ENCODE measurements at regions of chr1 and their contacts with region 1.

Region 1: DNA sequence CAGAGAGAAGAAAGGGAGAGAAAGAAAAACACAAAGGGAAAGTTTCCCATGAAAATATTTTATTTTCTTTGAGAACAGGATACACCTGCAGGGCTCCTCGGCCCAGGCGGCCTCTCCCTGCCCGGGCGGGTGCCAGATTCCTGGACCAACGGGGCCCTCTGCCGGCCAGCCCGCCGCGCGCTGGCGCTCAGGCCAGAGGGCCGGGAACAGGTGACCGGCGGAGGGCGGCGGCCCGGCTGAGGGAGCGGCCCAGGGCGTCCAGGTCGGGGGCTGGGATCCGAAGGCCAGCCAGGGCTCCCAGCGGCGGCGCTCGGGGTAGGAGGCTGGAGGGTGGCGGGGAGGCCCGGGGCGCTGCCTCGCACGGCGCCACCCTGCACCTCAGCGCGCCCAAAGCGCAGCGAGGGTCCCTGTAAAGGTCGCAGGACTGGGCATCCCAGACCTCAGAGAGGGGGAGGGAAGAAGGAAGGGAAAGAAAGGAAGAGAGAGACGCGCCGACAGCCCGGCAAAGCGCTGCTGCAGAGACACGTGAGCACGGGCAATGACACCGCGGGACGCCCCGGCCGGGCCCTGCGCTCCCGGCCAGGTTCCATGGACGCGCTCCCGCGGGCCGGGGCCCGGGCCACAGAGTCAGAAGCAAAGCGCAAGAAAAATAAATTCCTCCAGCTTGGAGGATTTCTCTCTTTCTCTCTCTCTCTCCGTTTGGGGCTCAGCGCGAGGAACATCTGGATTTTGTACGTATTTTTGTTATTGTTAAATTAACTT is 927 bp downstream of the WNT9A start:
- DNase-seq: peak; percentile 96
- H3K4me3 Mint-ChIP-seq: peak overlapping the region; percentile 66
- H3K27ac Mint-ChIP-seq: peak overlapping the region; percentile 86
- H3K4me1 Mint-ChIP-seq: peaks cover 14% of the 10 kb centered on the region
- H3K27me3 Mint-ChIP-seq: no peaks in the 10 kb centered on the region
- CTCF ChIP-seq: peak; percentile 98

Region 2: DNA sequence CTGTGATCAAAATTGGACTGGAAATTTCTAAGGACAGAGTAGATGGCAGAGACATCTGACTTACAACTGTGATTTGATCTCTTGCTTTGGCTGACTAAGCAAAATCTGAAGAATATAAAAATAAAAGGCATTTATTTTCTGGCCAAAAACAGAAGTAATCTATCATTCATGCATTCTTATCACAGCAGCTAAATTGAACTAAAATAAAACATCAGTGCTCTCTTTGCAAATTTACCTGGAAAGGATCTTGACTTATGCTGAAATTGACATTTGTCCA is 464.8 kb before region 1 on chr1:
- CTCF ChIA-PET with region 1: interaction called, 7 read pairs
- POLR2A ChIA-PET with region 1: interaction called, 13 read pairs
- intact Hi-C with region 1: loop called (anchors 1 kb)
- DNase-seq: no peak
- H3K4me3 Mint-ChIP-seq: no peak overlapping the region
- H3K27ac Mint-ChIP-seq: no peak overlapping the region
- H3K4me1 Mint-ChIP-seq: no peaks in the 10 kb centered on the region
- H3K27me3 Mint-ChIP-seq: peaks cover 66% of the 10 kb centered on the region
- CTCF ChIP-seq: no peak

Region 3: DNA sequence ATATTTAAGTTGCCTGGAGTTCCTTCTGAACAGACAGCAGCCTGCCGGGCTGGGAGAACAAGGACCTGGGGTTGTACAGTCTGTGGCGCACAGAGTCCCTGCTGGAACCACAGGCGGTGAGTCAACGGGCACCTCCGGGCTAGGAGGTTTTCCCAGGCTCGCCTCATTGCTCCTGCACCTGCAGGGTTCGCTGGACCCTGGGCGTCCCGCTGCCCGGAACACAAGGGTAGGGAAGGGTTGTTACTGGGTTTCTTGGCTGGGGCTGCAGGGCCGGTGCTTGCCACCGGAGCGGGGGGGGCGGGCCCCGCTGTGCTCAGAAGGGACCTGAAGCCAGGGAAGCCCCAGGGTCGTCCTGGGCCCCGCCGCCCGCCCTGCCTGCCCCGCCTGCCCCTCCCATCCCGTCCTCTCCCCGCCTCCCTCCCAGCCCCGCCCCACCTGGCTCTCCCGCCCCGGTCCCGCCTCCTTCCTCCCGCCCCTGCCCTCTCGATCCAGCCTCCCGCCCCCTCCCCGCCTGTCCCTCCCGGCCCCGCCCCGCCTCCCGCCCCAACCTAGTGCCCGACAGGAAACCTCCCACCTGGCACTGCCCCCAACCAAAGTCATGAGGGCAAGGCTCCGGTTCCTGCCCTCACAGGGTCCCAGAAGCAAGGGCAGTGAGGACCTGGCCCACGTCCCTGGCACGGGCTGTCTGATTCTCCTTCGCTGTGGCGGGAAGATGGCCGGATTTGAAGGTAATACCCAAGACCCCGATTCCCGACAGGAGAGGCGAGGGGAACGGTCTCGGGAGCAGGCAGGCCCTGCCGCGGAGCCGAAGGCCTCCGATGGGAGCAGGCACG is 218.5 kb before region 1 on chr1:
- CTCF ChIA-PET with region 1: interaction called, 4 read pairs
- POLR2A ChIA-PET with region 1: interaction called, 4 read pairs
- intact Hi-C with region 1: loop called (anchors 1 kb)
- DNase-seq: peak; percentile 97
- H3K4me3 Mint-ChIP-seq: peak overlapping the region; percentile 93
- H3K27ac Mint-ChIP-seq: peak overlapping the region; percentile 55
- H3K4me1 Mint-ChIP-seq: peaks cover 46% of the 10 kb centered on the region
- H3K27me3 Mint-ChIP-seq: no peaks in the 10 kb centered on the region
- CTCF ChIP-seq: no peak

Region 4: GRCh38 chr1:227805606-227806197 is 141.1 kb before region 1 on chr1:
- CTCF ChIA-PET with region 1: interaction called, 28 read pairs
- POLR2A ChIA-PET with region 1: interaction called, 61 read pairs
- intact Hi-C with region 1: loop called (anchors 1 kb)
- DNase-seq: peak; percentile 100
- H3K4me3 Mint-ChIP-seq: no peak overlapping the region
- H3K27ac Mint-ChIP-seq: peak overlapping the region; percentile 93
- H3K4me1 Mint-ChIP-seq: peaks cover 27% of the 10 kb centered on the region
- H3K27me3 Mint-ChIP-seq: no peaks in the 10 kb centered on the region
- CTCF ChIP-seq: peak; percentile 36

Region 5: DNA sequence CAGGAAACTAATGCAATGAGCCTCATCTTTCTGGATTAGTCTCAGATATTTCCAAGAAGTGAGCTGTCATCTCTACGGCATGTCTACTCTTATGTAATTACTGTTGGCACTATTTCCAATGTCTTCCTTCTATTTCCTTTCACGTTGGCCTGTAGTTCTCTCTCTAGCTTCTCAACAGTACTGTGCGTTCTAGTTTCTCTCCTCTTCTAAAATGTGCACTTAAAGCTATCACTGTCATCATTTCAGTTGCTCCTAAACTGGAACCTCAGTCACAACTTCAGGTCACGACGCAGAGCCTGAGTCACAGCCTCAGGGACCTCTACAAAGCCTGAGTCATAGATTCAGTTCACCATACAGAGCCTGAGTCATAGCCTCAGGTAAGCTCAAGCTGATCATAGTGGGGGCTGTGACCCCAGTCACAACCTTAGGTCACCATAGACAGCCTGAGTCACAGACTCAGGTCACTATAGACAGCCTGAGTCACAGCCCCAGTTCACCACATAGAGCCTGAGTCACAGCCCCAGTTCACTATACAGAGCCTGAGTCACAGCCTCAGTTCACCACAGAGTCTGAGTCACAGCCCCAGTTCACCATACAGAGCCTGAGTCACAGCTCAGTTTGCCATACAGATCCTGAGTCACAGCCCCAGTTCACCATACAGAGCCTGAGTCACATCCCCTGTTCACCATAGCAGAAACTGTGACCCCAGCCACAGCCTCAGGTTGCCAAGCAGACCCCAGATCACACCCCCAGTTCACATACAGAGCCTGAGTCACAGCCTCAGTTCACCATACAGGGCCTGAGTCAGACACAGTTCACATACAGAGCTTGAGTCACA is 12.1 kb before region 1 on chr1:
- CTCF ChIA-PET with region 1: interaction called, 10 read pairs
- POLR2A ChIA-PET with region 1: interaction called, 21 read pairs
- intact Hi-C with region 1: no loop called
- DNase-seq: peak; percentile 99
- H3K4me3 Mint-ChIP-seq: no peak overlapping the region
- H3K27ac Mint-ChIP-seq: peak overlapping the region; percentile 18
- H3K4me1 Mint-ChIP-seq: peaks cover 16% of the 10 kb centered on the region
- H3K27me3 Mint-ChIP-seq: no peaks in the 10 kb centered on the region
- CTCF ChIP-seq: no peak

Region 6: GRCh38 chr1:228087771-228088251 is 141.0 kb after region 1 on chr1:
- CTCF ChIA-PET with region 1: no interaction called
- POLR2A ChIA-PET with region 1: interaction called, 5 read pairs
- intact Hi-C with region 1: loop called (anchors 5 kb)
- DNase-seq: peak; percentile 95
- H3K4me3 Mint-ChIP-seq: peak overlapping the region; percentile 77
- H3K27ac Mint-ChIP-seq: peak overlapping the region; percentile 78
- H3K4me1 Mint-ChIP-seq: peaks cover 82% of the 10 kb centered on the region
- H3K27me3 Mint-ChIP-seq: no peaks in the 10 kb centered on the region
- CTCF ChIP-seq: no peak

Region 7: DNA sequence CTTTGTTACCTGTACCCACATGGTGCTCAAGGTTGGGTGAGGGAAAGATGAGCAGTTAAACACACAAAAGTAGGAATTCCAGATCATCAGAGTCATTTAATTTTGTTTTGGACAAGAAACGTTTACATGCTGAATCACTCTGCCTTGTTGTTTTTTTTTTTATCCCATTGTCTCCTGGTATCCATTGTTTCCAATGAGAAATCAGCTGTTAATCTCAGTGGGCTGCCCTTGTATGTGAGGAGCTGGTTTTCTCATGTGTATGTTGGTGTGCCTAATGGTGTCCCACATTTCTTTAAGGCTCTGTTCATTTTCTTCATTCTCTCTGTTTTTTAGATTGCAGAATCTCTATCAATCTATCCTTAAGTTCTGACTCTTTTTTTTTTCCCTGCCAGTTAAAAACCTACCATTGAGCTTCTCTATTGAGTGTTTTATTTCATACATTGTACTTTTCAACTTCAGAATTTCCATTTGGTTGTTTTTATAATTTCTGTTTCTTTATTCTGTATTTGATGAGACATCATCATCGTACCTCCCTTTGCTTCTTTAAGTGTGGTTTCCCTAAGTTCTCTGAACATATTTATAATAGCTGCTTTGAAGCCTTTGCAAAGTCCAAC is 252.3 kb after region 1 on chr1:
- CTCF ChIA-PET with region 1: no interaction called
- POLR2A ChIA-PET with region 1: no interaction called
- intact Hi-C with region 1: no loop called
- DNase-seq: peak; percentile 33
- H3K4me3 Mint-ChIP-seq: no peak overlapping the region
- H3K27ac Mint-ChIP-seq: no peak overlapping the region
- H3K4me1 Mint-ChIP-seq: no peaks in the 10 kb centered on the region
- H3K27me3 Mint-ChIP-seq: no peaks in the 10 kb centered on the region
- CTCF ChIP-seq: no peak

Region 8: GRCh38 chr1:228393248-228393699 is 446.5 kb after region 1 on chr1:
- CTCF ChIA-PET with region 1: no interaction called
- POLR2A ChIA-PET with region 1: no interaction called
- intact Hi-C with region 1: no loop called
- DNase-seq: peak; percentile 82
- H3K4me3 Mint-ChIP-seq: no peak overlapping the region
- H3K27ac Mint-ChIP-seq: peak overlapping the region; percentile 75
- H3K4me1 Mint-ChIP-seq: peaks cover 17% of the 10 kb centered on the region
- H3K27me3 Mint-ChIP-seq: no peaks in the 10 kb centered on the region
- CTCF ChIP-seq: peak; percentile 64